ENCODE measurements at regions of chr6 and their contacts with region 1.

Region 1: DNA sequence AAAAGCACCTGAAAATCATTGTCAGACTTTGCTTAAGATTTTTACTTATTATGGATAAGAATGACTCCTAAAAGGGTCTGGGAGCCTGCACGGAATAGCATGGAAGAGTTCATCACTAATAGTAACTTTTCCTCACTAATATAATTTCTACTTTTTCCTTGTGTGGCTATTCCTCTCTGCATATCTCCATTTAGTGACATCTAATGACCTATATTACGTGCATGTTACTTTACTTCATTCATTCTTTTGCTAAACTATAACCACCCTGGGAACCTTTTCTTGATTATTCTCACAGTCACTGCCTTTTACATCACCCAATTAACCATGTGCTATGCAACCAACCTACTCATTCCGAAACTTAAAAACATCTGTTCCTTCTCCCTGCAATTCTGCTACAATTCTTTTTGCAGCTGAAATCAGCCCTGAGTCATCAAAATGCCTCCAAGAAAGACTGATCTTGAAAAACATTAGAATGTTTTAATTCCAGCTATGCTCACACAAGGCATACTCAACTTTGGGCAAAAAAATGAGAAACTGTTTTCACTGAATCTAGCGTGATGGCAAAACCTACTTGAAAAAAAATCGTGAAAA is 313.3 kb downstream of the RNGTT start:
- DNase-seq: no peak
- ATAC-seq: peak; percentile 31
- H3K4me3 Mint-ChIP-seq: no peak overlapping the region
- H3K27ac Mint-ChIP-seq: peak overlapping the region; percentile 0
- H3K4me1 Mint-ChIP-seq: peaks cover 10% of the 10 kb centered on the region
- H3K27me3 Mint-ChIP-seq: no peaks in the 10 kb centered on the region
- CTCF ChIP-seq: no peak

Region 2: DNA sequence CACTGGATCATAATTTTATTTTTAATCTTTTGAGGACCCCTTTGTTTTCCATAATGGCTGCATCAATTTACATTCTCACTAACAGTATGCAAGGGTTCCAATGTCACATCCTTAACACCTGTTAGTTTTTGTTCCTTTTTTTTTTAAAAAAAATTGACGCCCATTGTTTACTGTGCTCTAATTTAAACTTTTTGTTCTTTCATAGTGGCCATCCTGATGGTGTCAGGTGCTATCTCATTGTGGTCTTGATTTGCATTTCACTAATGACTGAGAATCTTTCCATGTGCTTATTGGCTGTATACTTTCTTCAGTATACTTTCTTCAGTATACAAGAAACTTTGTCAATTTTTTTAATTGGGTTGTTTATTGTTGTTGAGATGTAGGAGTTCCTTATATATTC is 33.7 kb before region 1 on chr6:
- CTCF ChIA-PET with region 1: no interaction called
- POLR2A ChIA-PET with region 1: no interaction called
- intact Hi-C with region 1: loop called (anchors 5 kb)
- DNase-seq: no peak
- ATAC-seq: peak; percentile 43
- H3K4me3 Mint-ChIP-seq: peak overlapping the region; percentile 0
- H3K27ac Mint-ChIP-seq: peak overlapping the region; percentile 79
- H3K4me1 Mint-ChIP-seq: peaks cover 68% of the 10 kb centered on the region
- H3K27me3 Mint-ChIP-seq: no peaks in the 10 kb centered on the region
- CTCF ChIP-seq: no peak